Panc1 (cell line): ENCODE measurements at regions of chr2 and their contacts with region 1.

Region 1: GRCh38 chr2:36561237-36561944 is 36.6 kb downstream of the FEZ2 start:
- DNase-seq: peak; percentile 86
- ATAC-seq: peak; percentile 94
- H3K4me3 ChIP-seq: 0 out of 4 replicates have a peak overlapping the region, but pooled peaks of 1 of the 2 experiments have one; percentile 21
- H3K27ac ChIP-seq: peak overlapping the region; percentile 99
- H3K4me1 ChIP-seq: peaks cover 87% of the 10 kb centered on the region
- H3K27me3 ChIP-seq: no peaks in the 10 kb centered on the region
- CTCF ChIP-seq: no peak

Region 2: GRCh38 chr2:36663851-36664695 is 102.7 kb after region 1 on chr2:
- CTCF ChIA-PET with region 1: interaction called, 5 read pairs
- POLR2A ChIA-PET with region 1: no interaction called
- in situ Hi-C with region 1: no loop called
- intact Hi-C with region 1: loop called (anchors 5 kb)
- DNase-seq: peak; percentile 74
- ATAC-seq: peak; percentile 97
- H3K4me3 ChIP-seq: peak overlapping the region in 1 of 2 experiments; percentile 32; a peak in 2 of 4 replicates
- H3K27ac ChIP-seq: peak overlapping the region; percentile 84
- H3K4me1 ChIP-seq: peaks cover 21% of the 10 kb centered on the region
- H3K27me3 ChIP-seq: no peaks in the 10 kb centered on the region
- CTCF ChIP-seq: peak; percentile 79